ENCODE measurements at regions of chr11 and their contacts with region 1.

Region 1: GRCh38 chr11:118198370-118198769 is 21.9 kb upstream of the SCN2B start:
- DNase-seq: peak; percentile 84
- ATAC-seq: peak; percentile 75
- H3K4me3 ChIP-seq: peak overlapping the region in 1 of 5 experiments; percentile 21
- H3K4me3 Mint-ChIP-seq: peak overlapping the region; percentile 44
- H3K27ac ChIP-seq: no peak overlapping the region
- H3K27ac Mint-ChIP-seq: no peak overlapping the region
- H3K4me1 ChIP-seq: peaks cover 0 to 3% of the 10 kb centered on the region in 2 donors
- H3K4me1 Mint-ChIP-seq: no peaks in the 10 kb centered on the region
- H3K27me3 ChIP-seq: peaks cover 0 to 15% (median 2%) of the 10 kb centered on the region in 4 experiments
- H3K27me3 Mint-ChIP-seq: peaks cover 3% of the 10 kb centered on the region
- CTCF ChIP-seq: peak; percentile 93

Region 2: DNA sequence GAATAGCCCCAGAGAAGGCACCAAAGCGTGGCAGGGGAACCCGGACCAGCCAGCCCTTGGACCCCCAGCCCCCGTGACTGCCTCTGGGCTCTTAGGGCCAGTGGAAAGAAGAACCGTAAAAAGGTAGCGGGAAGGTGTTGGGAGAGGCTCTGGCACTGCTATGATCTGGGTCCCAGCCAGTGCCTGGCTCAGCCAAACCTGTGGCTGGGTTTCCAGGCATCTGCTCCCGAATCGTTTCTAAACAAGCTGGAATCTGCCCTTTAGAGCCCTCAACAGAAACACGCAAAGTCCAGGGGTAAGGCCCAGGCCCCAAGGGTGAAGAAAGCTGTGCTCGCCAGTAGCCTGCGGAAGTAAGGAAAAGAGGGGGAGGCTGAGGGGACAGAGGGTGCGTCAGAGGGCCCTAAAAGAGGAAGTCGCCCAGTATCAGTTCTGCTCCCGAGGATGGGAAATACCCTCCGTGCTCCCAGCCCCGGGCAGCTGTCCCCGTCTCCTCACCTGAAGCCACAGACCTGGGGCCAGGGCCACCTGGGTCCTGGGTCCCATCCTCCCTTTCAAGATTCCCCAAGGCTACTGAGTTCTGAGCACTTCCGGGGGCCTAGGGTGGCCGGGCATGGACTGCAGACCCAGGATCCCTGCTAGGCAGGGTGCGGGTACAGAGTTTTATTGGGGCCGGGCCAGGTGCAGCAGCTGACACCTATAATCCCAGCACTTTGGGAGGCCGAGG is 187.5 kb before region 1 on chr11:
- CTCF ChIA-PET with region 1: no interaction called
- POLR2A ChIA-PET with region 1: no interaction called
- intact Hi-C with region 1: no loop called
- DNase-seq: peak; percentile 96
- ATAC-seq: peak; percentile 73
- H3K4me3 ChIP-seq: peak overlapping the region in 2 of 5 experiments; percentile 2 to 38
- H3K4me3 Mint-ChIP-seq: peak overlapping the region; percentile 75
- H3K27ac ChIP-seq: peak overlapping the region; percentile 95 to 99
- H3K27ac Mint-ChIP-seq: peak overlapping the region; percentile 99
- H3K4me1 ChIP-seq: peaks cover 99 to 100% of the 10 kb centered on the region in 2 donors
- H3K4me1 Mint-ChIP-seq: peaks cover 100% of the 10 kb centered on the region
- H3K27me3 ChIP-seq: no peaks in the 10 kb centered on the region
- H3K27me3 Mint-ChIP-seq: no peaks in the 10 kb centered on the region
- CTCF ChIP-seq: no peak

Region 3: GRCh38 chr11:118240999-118241768 is 42.8 kb after region 1 on chr11:
- CTCF ChIA-PET with region 1: interaction called, 32 read pairs
- POLR2A ChIA-PET with region 1: no interaction called
- intact Hi-C with region 1: no loop called
- DNase-seq: no peak
- ATAC-seq: peak; percentile 91
- H3K4me3 ChIP-seq: peak overlapping the region in 1 of 5 experiments; percentile 1
- H3K4me3 Mint-ChIP-seq: peak overlapping the region; percentile 5
- H3K27ac ChIP-seq: no peak overlapping the region
- H3K27ac Mint-ChIP-seq: no peak overlapping the region
- H3K4me1 ChIP-seq: peaks cover 15 to 21% of the 10 kb centered on the region in 2 donors
- H3K4me1 Mint-ChIP-seq: peaks cover 39% of the 10 kb centered on the region
- H3K27me3 ChIP-seq: no peaks in the 10 kb centered on the region
- H3K27me3 Mint-ChIP-seq: peaks cover 4% of the 10 kb centered on the region
- CTCF ChIP-seq: no peak

Region 4: DNA sequence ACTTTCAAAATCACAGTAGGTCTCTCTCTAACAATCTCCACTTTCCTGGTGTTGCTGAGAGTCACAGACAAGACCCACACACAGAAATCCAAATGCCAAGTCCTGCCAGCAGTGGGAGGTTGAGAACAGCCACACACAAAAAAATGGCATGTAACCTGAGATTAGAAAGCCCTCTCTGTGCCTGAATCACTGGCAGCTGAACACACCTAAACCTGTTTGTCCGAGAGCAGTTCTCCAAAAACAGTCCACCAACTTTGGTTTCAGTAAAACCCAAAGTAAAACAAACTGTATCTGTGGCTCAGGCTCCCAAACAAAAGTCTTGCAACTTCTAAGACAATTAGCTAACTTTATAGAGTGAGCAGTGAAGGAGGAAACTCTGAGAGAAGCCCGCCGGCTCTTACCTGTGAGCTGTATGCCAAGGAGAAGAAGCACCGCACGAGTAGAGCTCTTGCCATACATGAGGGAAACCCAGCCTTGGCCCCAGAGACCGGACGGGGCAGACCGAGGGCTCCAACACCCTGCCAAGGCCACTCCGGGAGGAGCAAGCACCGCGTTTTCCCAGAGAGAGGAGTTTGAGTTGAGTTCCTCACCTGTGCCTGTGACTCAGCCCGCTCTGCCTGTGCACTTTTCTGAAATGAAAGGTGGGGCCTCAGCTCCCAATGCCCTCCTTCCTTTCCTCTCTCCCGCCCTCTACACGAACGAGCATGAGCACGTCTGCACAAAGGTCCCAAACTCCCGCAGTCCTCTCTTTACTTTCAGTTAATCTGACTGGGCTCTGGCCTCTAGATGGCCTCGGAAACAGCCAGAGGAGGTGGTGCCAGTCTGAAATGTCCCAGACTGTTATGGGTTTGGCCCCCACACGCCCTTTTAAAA is 65.6 kb after region 1 on chr11 and contains the start of gene MPZL2:
- CTCF ChIA-PET with region 1: interaction called, 26 read pairs
- POLR2A ChIA-PET with region 1: interaction called, 4 read pairs
- intact Hi-C with region 1: no loop called
- DNase-seq: peak; percentile 27
- ATAC-seq: peak; percentile 74
- H3K4me3 ChIP-seq: peak within 1 kb of the TSS in 2 of 5 experiments; percentile 5 to 8
- H3K4me3 Mint-ChIP-seq: peak within 1 kb of the TSS; percentile 70
- H3K27ac ChIP-seq: no peak within 1 kb of the TSS
- H3K27ac Mint-ChIP-seq: no peak within 1 kb of the TSS
- H3K4me1 ChIP-seq: peaks cover 9 to 11% of the 10 kb centered on the region in 2 donors
- H3K4me1 Mint-ChIP-seq: peaks cover 10% of the 10 kb centered on the region
- H3K27me3 ChIP-seq: peaks cover 0 to 56% (median 44%) of the 10 kb centered on the region in 4 experiments
- H3K27me3 Mint-ChIP-seq: peaks cover 43% of the 10 kb centered on the region
- CTCF ChIP-seq: no peak
- total RNA-seq, gene MPZL2: 1.2 TPM in 1 of 2 replicates, not detected in the other

Region 5: DNA sequence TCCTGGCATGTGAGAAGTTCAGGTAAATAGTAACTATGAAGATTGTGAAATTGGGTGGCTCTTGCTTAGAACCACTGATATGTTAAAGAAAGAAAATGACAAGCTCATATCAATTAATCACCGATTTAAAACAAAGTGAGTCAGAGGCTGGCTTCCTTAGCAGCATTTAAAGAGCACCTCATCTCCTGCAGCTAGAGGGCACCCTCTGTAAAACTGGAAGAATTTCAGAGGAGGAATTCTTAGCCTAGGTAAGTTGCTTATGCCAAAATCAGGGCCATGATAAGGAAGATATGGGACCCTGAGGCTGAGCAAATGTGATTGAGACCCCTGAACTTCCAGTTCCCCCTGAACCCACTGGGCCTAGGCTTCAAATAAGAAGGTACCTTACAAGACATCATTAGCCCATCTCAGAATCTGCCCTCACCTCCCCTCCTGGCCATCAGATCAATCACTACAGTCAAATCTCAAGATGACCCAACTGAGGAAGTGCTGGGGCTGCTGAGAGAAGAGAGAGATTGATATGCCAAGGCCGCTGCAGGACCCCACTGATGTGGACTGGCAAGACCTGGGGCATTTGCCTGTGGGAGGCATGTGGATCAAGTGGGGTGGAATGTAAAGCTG is 97.6 kb after region 1 on chr11:
- CTCF ChIA-PET with region 1: interaction called, 87 read pairs
- POLR2A ChIA-PET with region 1: no interaction called
- intact Hi-C with region 1: loop called (anchors 1 kb)
- DNase-seq: peak; percentile 54
- ATAC-seq: no peak
- H3K4me3 ChIP-seq: no peak overlapping the region
- H3K4me3 Mint-ChIP-seq: no peak overlapping the region
- H3K27ac ChIP-seq: no peak overlapping the region
- H3K27ac Mint-ChIP-seq: no peak overlapping the region
- H3K4me1 ChIP-seq: no peaks in the 10 kb centered on the region
- H3K4me1 Mint-ChIP-seq: peaks cover 2% of the 10 kb centered on the region
- H3K27me3 ChIP-seq: peaks cover 0 to 7% (median 2%) of the 10 kb centered on the region in 4 experiments
- H3K27me3 Mint-ChIP-seq: peaks cover 20% of the 10 kb centered on the region
- CTCF ChIP-seq: peak; percentile 60

Region 6: DNA sequence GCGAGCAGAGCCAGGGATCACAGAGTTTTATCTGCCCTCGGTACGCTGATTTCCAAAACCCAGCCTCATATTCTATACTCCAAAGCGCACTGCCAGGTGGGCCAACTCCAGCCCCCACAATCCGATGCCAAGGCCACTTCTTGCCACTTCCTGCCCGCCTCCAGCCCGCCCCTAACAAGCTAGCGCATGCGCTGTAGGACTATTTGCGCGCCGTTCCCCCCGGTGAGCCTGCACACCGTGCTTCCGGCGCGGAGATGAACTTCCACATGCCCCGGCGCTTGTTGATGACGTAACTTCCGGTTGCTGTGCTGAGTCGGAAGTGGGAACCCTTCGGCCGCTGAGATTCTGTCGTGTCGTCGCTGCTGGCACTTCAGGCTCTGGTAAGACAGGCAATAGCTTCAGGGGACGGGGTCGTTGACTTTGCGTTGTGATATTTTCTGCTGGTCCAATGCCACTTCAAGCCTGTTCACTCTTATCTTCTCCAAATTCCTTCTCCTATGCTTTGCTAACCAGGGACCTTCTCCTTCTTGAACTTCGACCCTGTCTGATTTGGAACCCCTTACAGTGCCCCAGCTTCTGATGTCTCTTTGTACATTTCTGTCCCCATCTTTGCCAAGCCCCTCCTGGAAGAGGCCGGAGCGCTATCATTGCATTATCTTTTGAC is 161.1 kb after region 1 on chr11 and contains the start of gene UBE4A:
- CTCF ChIA-PET with region 1: interaction called, 92 read pairs
- POLR2A ChIA-PET with region 1: interaction called, 3 read pairs
- intact Hi-C with region 1: no loop called
- DNase-seq: peak; percentile 97
- ATAC-seq: peak; percentile 91
- H3K4me3 ChIP-seq: peak within 1 kb of the TSS; percentile 82 to 98 (median 92)
- H3K4me3 Mint-ChIP-seq: peak within 1 kb of the TSS; percentile 98
- H3K27ac ChIP-seq: peak within 1 kb of the TSS; percentile 73 to 93
- H3K27ac Mint-ChIP-seq: peak within 1 kb of the TSS; percentile 96
- H3K4me1 ChIP-seq: peaks cover 18 to 23% of the 10 kb centered on the region in 2 donors
- H3K4me1 Mint-ChIP-seq: peaks cover 39% of the 10 kb centered on the region
- H3K27me3 ChIP-seq: no peaks in the 10 kb centered on the region
- H3K27me3 Mint-ChIP-seq: no peaks in the 10 kb centered on the region
- CTCF ChIP-seq: no peak
- total RNA-seq, gene UBE4A: 37.3 and 37.7 TPM in 2 replicates